Cardiac septum (tissue), 1 donor: ENCODE measurements at regions of chr7 and their contacts with region 1.

Region 1: DNA sequence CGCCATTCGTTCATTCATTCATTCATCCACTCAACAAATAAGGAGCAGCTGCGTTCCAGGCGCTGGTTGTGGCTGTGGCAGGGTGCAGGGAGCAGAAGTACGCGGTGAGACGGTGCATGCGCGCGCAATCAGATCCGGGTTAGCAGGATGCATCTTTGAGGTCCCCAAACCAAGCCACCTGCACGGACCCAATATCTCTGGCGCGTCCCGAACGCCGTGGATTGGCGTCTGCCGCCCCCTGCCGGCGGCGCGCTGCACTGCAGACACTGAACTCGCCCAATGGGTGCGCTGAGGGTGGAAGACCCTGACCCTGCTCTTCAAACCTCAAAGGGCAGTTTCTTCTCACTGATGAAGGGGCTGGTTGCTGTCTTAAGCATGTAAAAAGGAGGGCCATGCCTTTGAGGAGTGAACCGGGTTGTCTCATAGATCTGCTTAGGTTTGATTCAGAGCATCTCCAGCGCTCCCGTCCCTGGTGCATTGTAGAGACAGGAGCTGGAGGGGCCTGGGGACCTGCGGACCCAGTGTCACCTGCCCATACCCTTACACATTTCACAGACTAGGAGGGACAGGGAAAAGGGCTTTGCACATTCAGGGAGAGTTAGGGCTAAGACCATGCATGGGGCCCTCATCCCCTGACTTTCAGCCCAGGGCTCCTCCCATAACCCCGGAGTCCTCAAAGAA is 102.5 kb downstream of the RAMP3 start:
- DNase-seq: peak; percentile 88

Region 2: GRCh38 chr7:44735403-44736165 is 524.5 kb before region 1 on chr7:
- intact Hi-C with region 1: no loop called
- DNase-seq: no peak

Region 3: DNA sequence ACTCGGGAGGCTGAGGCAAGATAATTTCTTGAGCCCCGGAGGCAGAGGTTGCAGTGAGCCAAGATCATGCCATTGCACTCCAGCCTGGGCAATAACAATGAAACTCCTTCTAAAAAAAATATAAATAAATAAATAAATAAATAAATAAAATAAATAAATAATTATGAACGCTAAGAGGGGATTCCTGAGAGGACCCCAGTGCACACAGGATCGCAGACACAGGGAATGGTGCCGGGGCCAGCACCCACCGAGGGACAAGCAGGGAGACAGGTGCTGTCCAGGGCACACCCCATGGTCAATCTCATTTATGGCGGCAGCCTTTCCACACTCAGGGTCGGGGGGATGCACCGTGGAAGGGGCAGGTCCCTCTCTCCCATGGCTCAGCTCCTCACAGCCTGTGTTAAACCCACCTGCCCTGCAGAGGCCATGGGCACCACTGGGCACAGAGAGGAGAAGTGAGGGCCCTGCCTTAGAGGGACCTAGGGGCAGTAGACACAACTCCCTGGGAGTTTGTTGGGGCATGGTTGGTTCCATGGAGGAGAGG is 104.7 kb before region 1 on chr7:
- intact Hi-C with region 1: loop called (anchors 1 kb)
- DNase-seq: no peak